Activated T-helper 1 cell treated with anti-CD3 and anti-CD28 coated beads, Interleukin-12 subunit alpha, Interleukin-12 subunit beta, Interleukin-2, Interleukin-4 antibody, amounts not matched to agents 30 ng/mL and 10 ng/mL and 1 ng/mL, durations not matched to agents 14 hours and 24 hours and 36 hours (primary cell): ENCODE measurements at regions of chrX and their contacts with region 1.

Region 1: GRCh38 chrX:119574394-119575266 is at the start of gene UBE2A:
- DNase-seq: peak; percentile 81
- H3K4me3 Mint-ChIP-seq: peak within 1 kb of the TSS; percentile 86
- H3K27ac Mint-ChIP-seq: peak within 1 kb of the TSS; percentile 77
- H3K4me1 Mint-ChIP-seq: peaks cover 19% of the 10 kb centered on the region
- H3K27me3 Mint-ChIP-seq: no peaks in the 10 kb centered on the region
- total RNA-seq, gene UBE2A: 60.1 and 61.3 TPM in 2 replicates

Region 2: DNA sequence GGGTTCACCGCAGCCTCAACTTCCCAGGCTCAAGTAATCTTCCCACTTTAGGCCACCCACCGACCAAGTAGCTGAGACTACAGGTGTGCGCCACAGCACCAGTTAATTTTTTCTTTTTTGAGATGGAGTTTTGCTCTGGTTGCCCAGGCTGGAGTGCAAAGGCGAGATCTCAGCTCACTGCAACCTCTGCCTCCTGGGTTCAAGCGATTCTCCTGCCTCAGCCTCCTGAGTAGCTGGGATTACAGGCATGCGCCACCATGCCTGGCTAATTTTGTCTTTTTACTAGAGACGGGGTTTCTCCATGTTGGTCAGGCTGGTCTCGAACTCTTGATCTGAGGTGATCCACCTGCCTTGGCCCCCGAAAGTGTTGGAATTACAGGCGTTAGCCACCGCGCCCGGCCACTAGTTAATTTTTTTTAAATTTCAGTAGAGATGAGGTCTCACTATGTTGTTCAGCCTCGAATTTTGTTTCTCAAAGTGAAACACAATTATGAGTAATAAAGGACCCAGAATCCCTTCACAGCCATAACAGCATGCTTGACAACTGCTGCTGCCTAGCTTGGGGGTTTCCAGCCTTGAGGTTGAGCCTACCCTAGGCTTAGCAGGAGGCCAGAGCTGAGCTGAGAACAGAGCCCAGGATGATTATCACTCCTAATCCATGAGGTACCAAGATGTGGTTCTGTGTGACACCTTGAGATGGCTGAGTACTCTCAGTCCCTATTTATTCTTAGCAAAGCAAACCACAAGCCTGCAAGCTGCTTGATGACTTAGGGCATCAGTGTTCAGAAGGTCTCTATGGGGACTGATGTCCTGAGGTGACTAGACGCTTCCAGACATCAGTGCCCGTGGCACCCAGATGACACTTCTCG is 73.2 kb after region 1 on chrX:
- intact Hi-C with region 1: loop called (anchors 5 kb)
- DNase-seq: peak; percentile 62
- H3K4me3 Mint-ChIP-seq: peak overlapping the region; percentile 66
- H3K27ac Mint-ChIP-seq: peak overlapping the region; percentile 91
- H3K4me1 Mint-ChIP-seq: peaks cover 22% of the 10 kb centered on the region
- H3K27me3 Mint-ChIP-seq: no peaks in the 10 kb centered on the region

Region 3: DNA sequence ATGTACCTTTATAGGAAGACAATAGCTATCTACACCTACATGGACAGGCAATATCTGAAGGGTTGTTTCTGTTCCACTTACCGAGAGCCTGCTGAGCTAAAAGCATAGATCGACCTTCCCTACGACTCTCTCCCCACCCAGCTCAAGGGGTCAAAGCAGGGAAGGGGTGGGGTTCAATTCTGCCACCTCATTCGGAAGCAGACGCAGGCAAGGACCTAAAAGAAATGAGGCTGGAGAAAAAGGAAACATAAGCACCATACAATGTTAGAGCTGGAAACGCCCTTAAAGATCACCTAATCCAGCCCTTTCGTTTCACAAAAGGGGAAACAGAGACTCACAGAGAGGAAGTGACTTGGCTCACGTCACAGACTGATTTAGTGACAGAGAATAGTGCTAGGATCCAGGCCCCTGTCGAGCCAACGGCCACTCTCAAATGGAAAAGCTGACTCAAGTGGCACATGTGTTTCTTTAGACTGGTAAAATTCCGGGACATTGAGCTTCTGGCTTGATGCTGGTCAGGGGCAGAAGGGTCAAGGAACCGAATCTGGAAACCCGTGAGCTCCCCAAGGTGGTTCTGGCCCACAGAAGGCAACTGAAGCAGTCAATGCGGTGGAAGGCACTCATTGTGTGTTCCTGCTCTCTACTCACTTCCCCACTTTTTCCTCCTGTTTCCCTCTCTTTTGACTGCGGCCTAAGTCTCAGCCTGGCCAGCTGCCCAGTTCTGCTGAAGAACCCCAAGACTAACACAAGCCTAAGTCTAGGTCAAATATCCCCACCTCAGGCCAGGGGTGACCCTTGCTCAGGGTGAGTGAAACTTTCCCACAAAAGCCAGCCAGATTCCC is 110.8 kb after region 1 on chrX:
- intact Hi-C with region 1: loop called (anchors 2 kb)
- DNase-seq: no peak
- H3K4me3 Mint-ChIP-seq: peak overlapping the region; percentile 93
- H3K27ac Mint-ChIP-seq: peak overlapping the region; percentile 94
- H3K4me1 Mint-ChIP-seq: peaks cover 65% of the 10 kb centered on the region
- H3K27me3 Mint-ChIP-seq: no peaks in the 10 kb centered on the region

Region 4: GRCh38 chrX:119693040-119693995 is 118.7 kb after region 1 on chrX and contains the start of gene SEPTIN6:
- intact Hi-C with region 1: loop called (anchors 2 kb)
- DNase-seq: peak; percentile 78
- H3K4me3 Mint-ChIP-seq: peak within 1 kb of the TSS; percentile 93
- H3K27ac Mint-ChIP-seq: peak within 1 kb of the TSS; percentile 94
- H3K4me1 Mint-ChIP-seq: peaks cover 6% of the 10 kb centered on the region
- H3K27me3 Mint-ChIP-seq: peaks cover 2% of the 10 kb centered on the region
- total RNA-seq, gene SEPTIN6: 159 and 172 TPM in 2 replicates

Region 5: GRCh38 chrX:119943185-119943988 is 368.8 kb after region 1 on chrX and contains the start of gene NKAP:
- intact Hi-C with region 1: loop called (anchors 5 kb)
- DNase-seq: peak; percentile 78
- H3K4me3 Mint-ChIP-seq: peak within 1 kb of the TSS; percentile 93
- H3K27ac Mint-ChIP-seq: peak within 1 kb of the TSS; percentile 97
- H3K4me1 Mint-ChIP-seq: peaks cover 16% of the 10 kb centered on the region
- H3K27me3 Mint-ChIP-seq: peaks cover 2% of the 10 kb centered on the region
- total RNA-seq, gene NKAP: 9.4 and 10.1 TPM in 2 replicates